ENCODE measurements at regions of chr5 and their contacts with region 1.

Region 1: GRCh38 chr5:172173831-172174153 is 14.2 kb downstream of the STK10 start:
- DNase-seq: peak; percentile 22 to 72 (median 50)
- ATAC-seq: peak; percentile 2 to 3
- H3K4me3 Mint-ChIP-seq: peak overlapping the region; percentile 86 to 100 (median 93)
- H3K27ac Mint-ChIP-seq: peak overlapping the region; percentile 96 to 100 (median 99)
- H3K4me1 Mint-ChIP-seq: peaks cover 58 to 99% (median 95%) of the 10 kb centered on the region in 4 donors
- H3K27me3 Mint-ChIP-seq: no peaks in the 10 kb centered on the region

Region 2: GRCh38 chr5:172097356-172097755 is 76.4 kb before region 1 on chr5:
- POLR2A ChIA-PET with region 1: no interaction called
- DNase-seq: no peak
- ATAC-seq: no peak
- H3K4me3 Mint-ChIP-seq: no peak overlapping the region
- H3K27ac Mint-ChIP-seq: peak overlapping the region in 3 of 10 donors; percentile 13 to 51 (median 46)
- H3K4me1 Mint-ChIP-seq: peaks cover 4 to 31% (median 26%) of the 10 kb centered on the region in 4 donors
- H3K27me3 Mint-ChIP-seq: no peaks in the 10 kb centered on the region

Region 3: GRCh38 chr5:172156541-172156994 is 17.2 kb before region 1 on chr5:
- POLR2A ChIA-PET with region 1: interaction called, 93 read pairs
- DNase-seq: no peak
- ATAC-seq: no peak
- H3K4me3 Mint-ChIP-seq: peak overlapping the region in 2 of 10 donors; percentile 0 to 39
- H3K27ac Mint-ChIP-seq: peak overlapping the region in 8 of 10 donors; percentile 29 to 88 (median 76)
- H3K4me1 Mint-ChIP-seq: peaks cover 46 to 86% (median 81%) of the 10 kb centered on the region in 4 donors
- H3K27me3 Mint-ChIP-seq: no peaks in the 10 kb centered on the region

Measured in naive thymus-derived CD8-positive, alpha-beta T cell (primary cell).